H1 (cell line): ENCODE measurements at regions of chr14 and their contacts with region 1.

Region 1: DNA sequence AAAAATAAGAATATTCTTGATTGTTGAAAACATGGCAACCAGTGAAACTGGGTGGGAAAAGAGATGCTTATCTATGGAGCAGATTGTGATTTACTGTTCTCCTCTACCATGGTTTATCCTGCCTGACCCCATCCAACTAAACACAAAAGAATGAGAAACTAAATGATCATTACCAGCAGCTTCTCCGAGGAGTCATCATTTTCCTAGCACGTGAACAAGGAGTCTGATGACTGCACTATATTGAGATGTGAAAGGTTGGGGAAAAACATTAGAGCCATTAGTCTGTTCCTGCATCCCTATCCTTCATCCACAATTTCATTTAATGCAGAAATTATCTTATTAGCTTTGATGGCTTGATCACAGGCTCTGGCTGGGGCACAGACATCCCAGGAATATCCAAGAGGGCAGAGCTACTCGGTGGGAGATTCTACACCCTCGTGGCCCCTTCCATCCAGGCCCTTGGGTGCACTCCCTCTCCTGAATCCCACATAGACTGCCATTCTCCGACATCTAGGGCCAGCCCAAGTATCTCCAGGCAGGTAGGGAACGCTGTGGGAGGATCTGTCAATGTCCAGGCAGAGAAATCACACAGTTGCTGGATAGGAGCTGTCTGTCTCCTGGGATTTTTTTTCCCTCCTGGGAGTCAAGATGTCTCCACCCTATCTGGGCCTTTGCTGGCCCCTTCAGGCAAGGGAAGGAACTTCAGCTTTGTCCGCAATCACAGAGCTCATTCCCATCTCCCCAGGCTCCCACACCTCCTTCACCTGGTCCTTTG is 43.3 kb upstream of the DHRS4 start:
- DNase-seq: peak; percentile 81 to 92
- H3K4me3 ChIP-seq: no peak overlapping the region
- H3K27ac ChIP-seq: no peak overlapping the region
- H3K4me1 ChIP-seq: peaks cover 0 to 9% (median 4%) of the 10 kb centered on the region in 4 experiments; a peak in 3 of 7 replicates
- H3K27me3 ChIP-seq: no peaks in the 10 kb centered on the region
- CTCF ChIP-seq: peak; percentile 67 to 93 (median 84)
- EP300 ChIP-seq: no peak
- POLR2A ChIP-seq: no peak
- RAD21 ChIP-seq: peak; percentile 93

Region 2: DNA sequence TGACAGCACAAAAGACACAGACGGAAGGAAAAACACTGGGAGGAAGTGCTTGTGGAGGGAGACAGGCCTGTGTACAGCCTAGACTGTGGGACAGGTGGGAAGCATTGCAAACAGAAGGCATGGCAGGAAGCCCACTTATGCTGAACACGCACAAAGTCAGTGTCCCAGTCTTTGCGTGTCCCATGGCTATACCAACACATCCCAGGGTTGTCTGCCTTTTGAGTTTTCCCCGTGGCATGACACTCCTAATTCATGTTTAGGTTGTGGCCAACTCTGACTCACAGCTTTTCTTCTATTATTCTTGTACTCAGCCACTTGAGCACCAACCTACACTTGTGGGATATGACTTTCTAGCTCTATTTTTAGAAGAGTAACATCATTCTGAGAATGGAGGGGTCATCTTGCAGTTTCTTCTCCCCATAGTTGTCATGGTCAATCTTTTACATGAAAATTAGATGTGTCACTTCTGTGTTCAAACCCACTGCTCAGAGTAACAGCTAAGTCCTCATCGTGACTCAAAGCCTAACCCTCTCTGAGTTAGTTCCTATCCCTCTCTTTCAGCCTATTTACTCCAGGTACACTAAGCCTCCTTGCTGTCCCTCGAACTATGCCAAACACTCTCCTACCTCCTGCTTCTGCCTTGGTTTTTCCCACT is 304.2 kb before region 1 on chr14:
- CTCF ChIA-PET with region 1: interaction called, 20 read pairs
- POLR2A ChIA-PET with region 1: no interaction called
- DNase-seq: no peak
- H3K4me3 ChIP-seq: no peak overlapping the region
- H3K27ac ChIP-seq: no peak overlapping the region
- H3K4me1 ChIP-seq: no peaks in the 10 kb centered on the region
- H3K27me3 ChIP-seq: no peaks in the 10 kb centered on the region; a peak in 1 of 7 replicates
- CTCF ChIP-seq: no peak
- EP300 ChIP-seq: no peak
- POLR2A ChIP-seq: no peak
- RAD21 ChIP-seq: no peak

Region 3: GRCh38 chr14:23665375-23666192 is 244.7 kb before region 1 on chr14:
- CTCF ChIA-PET with region 1: interaction called, 45 read pairs
- POLR2A ChIA-PET with region 1: interaction called, 3 read pairs
- DNase-seq: peak; percentile 15 to 57
- H3K4me3 ChIP-seq: no peak overlapping the region
- H3K27ac ChIP-seq: no peak overlapping the region
- H3K4me1 ChIP-seq: no peaks in the 10 kb centered on the region
- H3K27me3 ChIP-seq: no peaks in the 10 kb centered on the region
- CTCF ChIP-seq: peak; percentile 42 to 76 (median 76)
- EP300 ChIP-seq: no peak
- POLR2A ChIP-seq: no peak
- RAD21 ChIP-seq: peak; percentile 80 to 85

Region 4: GRCh38 chr14:23899788-23900187 is 10.5 kb before region 1 on chr14:
- CTCF ChIA-PET with region 1: interaction called, 17 read pairs
- POLR2A ChIA-PET with region 1: no interaction called
- DNase-seq: no peak
- H3K4me3 ChIP-seq: no peak overlapping the region
- H3K27ac ChIP-seq: no peak overlapping the region
- H3K4me1 ChIP-seq: no peaks in the 10 kb centered on the region
- H3K27me3 ChIP-seq: no peaks in the 10 kb centered on the region
- CTCF ChIP-seq: no peak
- EP300 ChIP-seq: no peak
- POLR2A ChIP-seq: no peak
- RAD21 ChIP-seq: no peak

Region 5: GRCh38 chr14:24123508-24124417 is 213.5 kb after region 1 on chr14:
- CTCF ChIA-PET with region 1: no interaction called
- POLR2A ChIA-PET with region 1: no interaction called
- DNase-seq: no peak
- H3K4me3 ChIP-seq: no peak overlapping the region
- H3K27ac ChIP-seq: no peak overlapping the region
- H3K4me1 ChIP-seq: no peaks in the 10 kb centered on the region
- H3K27me3 ChIP-seq: no peaks in the 10 kb centered on the region
- CTCF ChIP-seq: no peak
- EP300 ChIP-seq: no peak
- POLR2A ChIP-seq: no peak
- RAD21 ChIP-seq: no peak